ENCODE measurements at regions of chr5 and their contacts with region 1.

Region 1: GRCh38 chr5:138178516-138179276 is at the starts of genes BRD8 and KIF20A:
- DNase-seq: peak; percentile 62 to 89 (median 84)
- ATAC-seq: peak; percentile 92
- H3K4me3 ChIP-seq: peak within 1 kb of the TSS; percentile 85
- H3K4me3 Mint-ChIP-seq: peak within 1 kb of the TSS in 2 of 10 donors; percentile 23 to 51
- H3K27ac ChIP-seq: peak within 1 kb of the TSS; percentile 74
- H3K27ac Mint-ChIP-seq: peak within 1 kb of the TSS in 2 of 9 donors; percentile 38 to 60
- H3K4me1 ChIP-seq: peaks cover 10 to 15% of the 10 kb centered on the region in 2 donors
- H3K4me1 Mint-ChIP-seq: peaks cover 0 to 45% (median 17%) of the 10 kb centered on the region in 7 donors
- H3K27me3 ChIP-seq: no peaks in the 10 kb centered on the region
- H3K27me3 Mint-ChIP-seq: no peaks in the 10 kb centered on the region
- total RNA-seq, gene BRD8: 24.7 to 81.9 (median 66.1) TPM
- total RNA-seq, gene KIF20A: 0.29 to 34.1 TPM in 2 of 5 experiments, not detected in the others

Region 2: DNA sequence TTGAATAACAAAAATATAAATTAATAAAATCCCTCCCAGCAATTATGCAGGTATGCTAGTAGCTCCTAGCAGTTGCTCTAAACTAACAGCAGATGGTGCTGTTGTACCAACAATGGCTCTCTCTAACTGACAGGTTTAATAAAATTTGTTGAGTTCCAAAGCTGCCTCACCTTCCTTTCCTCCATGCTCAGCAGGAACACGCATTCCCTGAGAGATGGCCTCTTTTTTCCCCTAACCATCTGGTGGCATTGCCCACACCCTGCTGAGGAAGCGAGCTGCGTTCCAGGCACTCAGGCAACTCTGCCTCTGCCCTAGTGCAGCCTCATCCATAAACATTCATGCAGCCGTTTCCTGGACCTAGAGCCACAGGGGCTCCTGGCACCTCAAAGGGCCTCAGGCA is 549.0 kb before region 1 on chr5:
- CTCF ChIA-PET with region 1: no interaction called
- POLR2A ChIA-PET with region 1: no interaction called
- intact Hi-C with region 1: loop called in 1 of 2 experiments (anchors 1 kb)
- DNase-seq: peak in 7 of 9 donors; percentile 26 to 61 (median 52)
- ATAC-seq: peak; percentile 82
- H3K4me3 ChIP-seq: no peak overlapping the region
- H3K4me3 Mint-ChIP-seq: no peak overlapping the region
- H3K27ac ChIP-seq: no peak overlapping the region
- H3K27ac Mint-ChIP-seq: no peak overlapping the region
- H3K4me1 ChIP-seq: no peaks in the 10 kb centered on the region
- H3K4me1 Mint-ChIP-seq: peaks cover 0 to 2% (median 0%) of the 10 kb centered on the region in 7 donors
- H3K27me3 ChIP-seq: no peaks in the 10 kb centered on the region
- H3K27me3 Mint-ChIP-seq: no peaks in the 10 kb centered on the region

Region 3: GRCh38 chr5:138213161-138214029 is 34.7 kb after region 1 on chr5 and contains the start of gene CDC23:
- CTCF ChIA-PET with region 1: no interaction called
- POLR2A ChIA-PET with region 1: interaction called, 3 read pairs
- intact Hi-C with region 1: loop called (anchors 1 kb)
- DNase-seq: peak; percentile 65 to 95 (median 92)
- ATAC-seq: peak; percentile 98
- H3K4me3 ChIP-seq: peak within 1 kb of the TSS; percentile 97
- H3K4me3 Mint-ChIP-seq: peak within 1 kb of the TSS; percentile 92 to 99 (median 98)
- H3K27ac ChIP-seq: peak within 1 kb of the TSS; percentile 91
- H3K27ac Mint-ChIP-seq: peak within 1 kb of the TSS; percentile 95 to 98 (median 96)
- H3K4me1 ChIP-seq: peaks cover 0 to 8% of the 10 kb centered on the region in 2 donors
- H3K4me1 Mint-ChIP-seq: peaks cover 14 to 32% (median 27%) of the 10 kb centered on the region in 7 donors
- H3K27me3 ChIP-seq: no peaks in the 10 kb centered on the region
- H3K27me3 Mint-ChIP-seq: no peaks in the 10 kb centered on the region
- total RNA-seq, gene CDC23: 13.0 to 39.6 (median 25.5) TPM

Region 4: GRCh38 chr5:138337685-138338410 is 159.2 kb after region 1 on chr5 and contains the start of gene FAM53C:
- CTCF ChIA-PET with region 1: no interaction called
- POLR2A ChIA-PET with region 1: interaction called, 9 read pairs
- intact Hi-C with region 1: loop called in 1 of 2 experiments (anchors 2 kb)
- DNase-seq: peak; percentile 87 to 98 (median 93)
- ATAC-seq: peak; percentile 91
- H3K4me3 ChIP-seq: peak within 1 kb of the TSS; percentile 86
- H3K4me3 Mint-ChIP-seq: peak within 1 kb of the TSS; percentile 77 to 98 (median 94)
- H3K27ac ChIP-seq: peak within 1 kb of the TSS; percentile 95
- H3K27ac Mint-ChIP-seq: peak within 1 kb of the TSS; percentile 96 to 100 (median 99)
- H3K4me1 ChIP-seq: peaks cover 17 to 25% of the 10 kb centered on the region in 2 donors
- H3K4me1 Mint-ChIP-seq: peaks cover 16 to 42% (median 39%) of the 10 kb centered on the region in 7 donors
- H3K27me3 ChIP-seq: no peaks in the 10 kb centered on the region
- H3K27me3 Mint-ChIP-seq: no peaks in the 10 kb centered on the region
- total RNA-seq, gene FAM53C: 25.0 to 71.8 (median 27.7) TPM

Region 5: GRCh38 chr5:138449501-138450239 is 271.0 kb after region 1 on chr5:
- CTCF ChIA-PET with region 1: no interaction called
- POLR2A ChIA-PET with region 1: no interaction called
- intact Hi-C with region 1: loop called in 1 of 2 experiments (anchors 2 kb)
- DNase-seq: peak; percentile 24 to 89 (median 60)
- ATAC-seq: peak; percentile 91
- H3K4me3 ChIP-seq: no peak overlapping the region
- H3K4me3 Mint-ChIP-seq: peak overlapping the region in 4 of 10 donors; percentile 33 to 54 (median 46)
- H3K27ac ChIP-seq: no peak overlapping the region
- H3K27ac Mint-ChIP-seq: no peak overlapping the region
- H3K4me1 ChIP-seq: peaks cover 7% of the 10 kb centered on the region in 2 donors
- H3K4me1 Mint-ChIP-seq: peaks cover 0 to 9% (median 6%) of the 10 kb centered on the region in 7 donors
- H3K27me3 ChIP-seq: no peaks in the 10 kb centered on the region
- H3K27me3 Mint-ChIP-seq: peaks cover 0 to 3% (median 0%) of the 10 kb centered on the region in 5 donors

Region 6: GRCh38 chr5:138549414-138549813 is 370.7 kb after region 1 on chr5:
- CTCF ChIA-PET with region 1: no interaction called
- POLR2A ChIA-PET with region 1: no interaction called
- intact Hi-C with region 1: loop called (anchors 1 to 2 kb)
- DNase-seq: no peak
- ATAC-seq: no peak
- H3K4me3 ChIP-seq: no peak overlapping the region
- H3K4me3 Mint-ChIP-seq: no peak overlapping the region
- H3K27ac ChIP-seq: no peak overlapping the region
- H3K27ac Mint-ChIP-seq: peak overlapping the region in 2 of 9 donors; percentile 32 to 71
- H3K4me1 ChIP-seq: peaks cover 17 to 25% of the 10 kb centered on the region in 2 donors
- H3K4me1 Mint-ChIP-seq: peaks cover 31 to 62% (median 45%) of the 10 kb centered on the region in 7 donors
- H3K27me3 ChIP-seq: no peaks in the 10 kb centered on the region
- H3K27me3 Mint-ChIP-seq: no peaks in the 10 kb centered on the region

Region 7: DNA sequence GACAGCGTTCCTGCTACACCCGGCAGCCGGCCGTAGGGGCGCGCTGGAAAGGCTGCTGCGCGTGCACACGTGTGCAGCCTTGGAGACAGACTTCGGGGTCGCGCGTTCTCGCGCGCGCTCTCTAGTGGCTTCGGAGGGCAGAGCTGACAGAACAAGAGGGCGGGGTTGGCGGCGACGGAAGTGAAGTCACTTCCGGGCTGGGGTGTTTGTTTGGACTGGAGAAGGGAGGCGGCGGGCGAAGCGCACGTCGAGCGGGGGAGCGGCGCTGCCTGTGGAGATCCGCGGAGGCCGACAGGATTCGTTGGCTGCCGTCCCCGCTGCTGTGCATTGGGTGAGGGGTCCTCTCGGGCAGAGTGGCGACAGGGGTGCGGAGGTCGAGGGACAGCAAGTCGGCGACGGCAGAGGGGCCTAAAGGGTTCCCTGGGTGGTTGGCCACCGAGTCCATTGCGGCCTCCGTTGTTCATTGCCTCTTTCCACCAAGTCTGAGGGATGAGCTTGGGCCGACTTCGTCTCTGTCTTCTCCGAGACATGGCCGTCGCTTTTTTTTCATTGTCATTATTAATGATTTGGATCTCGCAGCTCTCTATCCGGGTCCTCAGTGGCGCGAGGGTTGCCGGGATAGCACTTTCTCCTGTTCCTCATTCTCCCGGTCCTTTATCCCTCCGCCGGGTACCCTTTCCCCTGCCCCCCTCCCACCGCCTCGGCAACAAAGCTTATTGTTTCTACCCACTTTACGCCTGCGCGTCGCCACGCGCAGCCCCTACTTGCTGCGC is 1163.1 kb after region 1 on chr5 and contains the start of gene PAIP2:
- CTCF ChIA-PET with region 1: no interaction called
- POLR2A ChIA-PET with region 1: no interaction called
- intact Hi-C with region 1: loop called in 1 of 2 experiments (anchors 2 kb)
- DNase-seq: peak; percentile 94 to 98 (median 97)
- ATAC-seq: peak; percentile 95
- H3K4me3 ChIP-seq: peak within 1 kb of the TSS; percentile 96
- H3K4me3 Mint-ChIP-seq: peak within 1 kb of the TSS; percentile 95 to 100 (median 98)
- H3K27ac ChIP-seq: peak within 1 kb of the TSS; percentile 98
- H3K27ac Mint-ChIP-seq: peak within 1 kb of the TSS; percentile 96 to 100 (median 99)
- H3K4me1 ChIP-seq: peaks cover 28 to 30% of the 10 kb centered on the region in 2 donors
- H3K4me1 Mint-ChIP-seq: peaks cover 34 to 65% (median 55%) of the 10 kb centered on the region in 7 donors
- H3K27me3 ChIP-seq: no peaks in the 10 kb centered on the region
- H3K27me3 Mint-ChIP-seq: peaks cover 0 to 5% (median 0%) of the 10 kb centered on the region in 5 donors
- total RNA-seq, gene PAIP2: 88.8 to 121 (median 106) TPM

Measured in naive thymus-derived CD4-positive, alpha-beta T cell (primary cell).